Activated CD8-positive, alpha-beta T cell treated with anti-CD3 and anti-CD28 coated beads for 36 hours (primary cell): ENCODE measurements at regions of chr12 and their contacts with region 1.

Region 1: DNA sequence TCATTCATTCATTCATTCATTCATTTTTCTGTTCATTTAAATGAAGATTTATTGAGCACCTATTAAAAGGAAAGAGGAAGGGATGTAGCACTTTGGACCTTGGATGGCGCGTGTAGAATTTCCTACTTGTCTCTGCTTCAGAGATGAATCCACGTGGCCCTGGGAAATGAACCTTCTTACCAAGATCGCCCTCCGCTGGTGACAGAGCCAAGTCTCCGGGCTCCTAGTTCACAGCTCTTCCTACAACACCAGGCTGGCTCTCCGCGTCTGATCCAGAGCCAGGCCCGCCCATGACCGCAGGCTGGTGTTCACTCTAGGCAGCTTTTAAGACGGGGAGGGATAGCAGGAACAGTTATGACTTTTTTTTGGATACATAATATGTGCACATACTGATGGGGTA is 70.9 kb upstream of the PIWIL1 start:
- DNase-seq: no peak
- ATAC-seq: no peak
- H3K4me3 Mint-ChIP-seq: no peak overlapping the region
- H3K27ac Mint-ChIP-seq: no peak overlapping the region
- H3K4me1 Mint-ChIP-seq: no peaks in the 10 kb centered on the region
- H3K27me3 Mint-ChIP-seq: peaks cover 4% of the 10 kb centered on the region
- CTCF ChIP-seq: no peak

Region 2: DNA sequence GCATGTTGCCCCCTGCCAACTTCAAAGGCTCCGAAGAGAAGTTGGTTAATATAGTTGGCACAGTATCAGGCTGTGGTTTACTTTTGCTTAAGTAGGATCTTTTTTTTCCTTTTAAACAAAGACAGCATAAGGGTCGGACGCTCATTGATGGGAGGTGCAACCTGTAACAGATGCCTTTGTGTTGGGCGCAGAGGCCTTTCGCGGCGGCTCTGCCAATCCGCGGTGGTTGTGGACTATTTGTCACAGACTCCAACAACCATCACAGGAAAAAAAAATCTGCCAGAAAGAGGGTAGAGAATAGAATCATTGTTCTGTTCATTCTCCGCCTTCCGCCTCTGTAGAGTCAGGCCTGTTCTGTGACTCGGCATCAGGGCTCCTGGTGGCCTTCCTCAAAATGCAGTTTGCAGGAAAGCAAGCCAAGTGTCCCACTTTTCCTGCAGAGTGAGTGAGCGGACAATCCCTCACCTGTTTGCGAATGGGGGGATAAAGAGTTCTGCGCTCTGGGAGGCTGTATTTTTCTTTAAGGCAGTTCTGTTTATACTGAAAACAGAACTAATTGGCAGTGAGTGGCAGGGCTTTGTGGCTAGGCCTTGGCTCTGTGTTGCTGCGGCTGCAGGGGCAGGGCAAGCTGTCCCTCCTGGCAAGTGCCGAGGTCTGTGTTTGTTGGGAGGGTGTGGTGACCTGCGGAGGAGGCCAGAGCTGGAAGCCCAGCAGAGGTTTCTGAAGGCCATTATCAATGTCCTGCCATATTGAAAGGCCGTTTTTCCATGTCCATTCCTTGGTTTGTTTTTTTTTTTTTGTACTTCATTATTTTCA is 12.1 kb before region 1 on chr12:
- CTCF ChIA-PET with region 1: no interaction called
- POLR2A ChIA-PET with region 1: no interaction called
- intact Hi-C with region 1: no loop called
- DNase-seq: no peak
- ATAC-seq: no peak
- H3K4me3 Mint-ChIP-seq: no peak overlapping the region
- H3K27ac Mint-ChIP-seq: no peak overlapping the region
- H3K4me1 Mint-ChIP-seq: no peaks in the 10 kb centered on the region
- H3K27me3 Mint-ChIP-seq: peaks cover 2% of the 10 kb centered on the region
- CTCF ChIP-seq: no peak

Region 3: DNA sequence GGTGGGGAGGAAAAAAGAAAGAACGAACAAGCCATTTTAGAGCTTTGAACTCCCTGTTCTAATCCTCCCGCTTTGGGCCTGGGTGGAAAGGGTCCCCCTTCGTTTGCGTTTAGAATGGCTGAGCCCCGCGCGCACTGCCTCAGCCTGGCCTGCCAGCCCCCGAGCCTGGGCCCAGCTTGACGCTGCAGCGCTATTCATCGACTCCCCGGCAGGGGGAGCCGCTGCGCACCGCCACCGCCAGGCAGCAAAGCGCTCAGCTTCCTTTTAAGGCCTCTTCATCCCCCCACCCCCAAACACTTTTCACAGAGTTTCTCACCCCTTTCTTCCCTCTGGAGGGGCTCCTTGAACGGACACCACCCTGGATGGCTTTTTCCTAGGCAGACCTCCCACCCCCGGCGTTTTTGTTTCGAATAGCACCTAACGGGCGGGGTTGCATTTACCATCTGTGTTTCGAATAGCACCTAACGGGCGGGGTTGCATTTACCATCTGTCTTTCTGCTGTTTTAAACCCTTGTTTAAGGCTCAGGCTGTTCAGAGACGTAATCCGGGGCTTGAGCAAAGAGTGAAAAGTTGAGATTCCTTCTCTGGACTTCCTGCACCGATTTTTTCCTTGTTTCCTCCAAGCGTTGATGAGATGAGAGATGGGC is 14.5 kb after region 1 on chr12:
- CTCF ChIA-PET with region 1: interaction called, 29 read pairs
- POLR2A ChIA-PET with region 1: no interaction called
- intact Hi-C with region 1: no loop called
- DNase-seq: peak; percentile 42
- ATAC-seq: peak; percentile 72
- H3K4me3 Mint-ChIP-seq: no peak overlapping the region
- H3K27ac Mint-ChIP-seq: no peak overlapping the region
- H3K4me1 Mint-ChIP-seq: peaks cover 4% of the 10 kb centered on the region
- H3K27me3 Mint-ChIP-seq: peaks cover 7% of the 10 kb centered on the region
- CTCF ChIP-seq: peak; percentile 70